ENCODE measurements at regions of chr1 and their contacts with region 1.

Region 1: GRCh38 chr1:85276215-85276977 is at the start of gene BCL10:
- DNase-seq: peak; percentile 94 to 99 (median 97)
- ATAC-seq: peak; percentile 96 to 99 (median 98)
- H3K4me3 ChIP-seq: peak within 1 kb of the TSS; percentile 68 to 100
- H3K4me3 Mint-ChIP-seq: peak within 1 kb of the TSS; percentile 83 to 88 (median 86)
- H3K27ac ChIP-seq: peak within 1 kb of the TSS; percentile 87
- H3K27ac Mint-ChIP-seq: peak within 1 kb of the TSS; percentile 86 to 94
- H3K4me1 ChIP-seq: peaks cover 10 to 14% of the 10 kb centered on the region in 2 experiments
- H3K4me1 Mint-ChIP-seq: peaks cover 49 to 62% (median 58%) of the 10 kb centered on the region in 3 donors
- H3K27me3 ChIP-seq: no peaks in the 10 kb centered on the region
- H3K27me3 Mint-ChIP-seq: no peaks in the 10 kb centered on the region
- total RNA-seq, gene BCL10: 25.8 to 40.0 (median 28.0) TPM

Region 2: GRCh38 chr1:84541679-84542078 is 734.7 kb before region 1 on chr1:
- CTCF ChIA-PET with region 1: no interaction called
- POLR2A ChIA-PET with region 1: no interaction called
- DNase-seq: peak in 1 of 35 experiments; percentile 21
- ATAC-seq: no peak
- H3K4me3 ChIP-seq: no peak overlapping the region
- H3K4me3 Mint-ChIP-seq: no peak overlapping the region
- H3K27ac ChIP-seq: no peak overlapping the region
- H3K27ac Mint-ChIP-seq: no peak overlapping the region
- H3K4me1 ChIP-seq: no peaks in the 10 kb centered on the region
- H3K4me1 Mint-ChIP-seq: peaks cover 0 to 5% (median 0%) of the 10 kb centered on the region in 3 donors
- H3K27me3 ChIP-seq: no peaks in the 10 kb centered on the region
- H3K27me3 Mint-ChIP-seq: no peaks in the 10 kb centered on the region

Region 3: GRCh38 chr1:85200870-85201339 is 75.5 kb before region 1 on chr1 and contains the start of gene SYDE2:
- CTCF ChIA-PET with region 1: interaction called in 1 of 2 experiments, 4 read pairs
- POLR2A ChIA-PET with region 1: interaction called in 1 of 2 experiments, 24 read pairs
- DNase-seq: peak; percentile 64 to 88 (median 77)
- ATAC-seq: peak; percentile 82 to 88 (median 84)
- H3K4me3 ChIP-seq: peak within 1 kb of the TSS; percentile 63 to 68
- H3K4me3 Mint-ChIP-seq: peak within 1 kb of the TSS; percentile 96 to 98 (median 98)
- H3K27ac ChIP-seq: peak within 1 kb of the TSS; percentile 49
- H3K27ac Mint-ChIP-seq: peak within 1 kb of the TSS; percentile 98 to 99
- H3K4me1 ChIP-seq: peaks cover 3 to 10% of the 10 kb centered on the region in 2 experiments
- H3K4me1 Mint-ChIP-seq: peaks cover 41 to 46% (median 42%) of the 10 kb centered on the region in 3 donors
- H3K27me3 ChIP-seq: peaks cover 5 to 17% of the 10 kb centered on the region in 2 experiments
- H3K27me3 Mint-ChIP-seq: peaks cover 0 to 8% of the 10 kb centered on the region in 2 donors
- total RNA-seq, gene SYDE2: 4.5 to 9.2 (median 5.8) TPM